Heart right ventricle (tissue), 16 donors: ENCODE measurements at regions of chr6 and their contacts with region 1.

Region 1: GRCh38 chr6:168377484-168377855 is 57.9 kb upstream of the DACT2 start:
- DNase-seq: peak; percentile 44 to 77
- ATAC-seq: peak; percentile 57 to 92 (median 86)
- H3K4me3 ChIP-seq: peak overlapping the region in 2 of 10 donors; percentile 0 to 13
- H3K27ac ChIP-seq: peak overlapping the region in 6 of 10 donors; percentile 8 to 77 (median 56)
- H3K4me1 ChIP-seq: peaks cover 0 to 8% (median 5%) of the 10 kb centered on the region in 9 donors
- H3K27me3 ChIP-seq: peaks cover 0 to 26% (median 0%) of the 10 kb centered on the region in 7 donors
- CTCF ChIP-seq: no peak

Region 2: DNA sequence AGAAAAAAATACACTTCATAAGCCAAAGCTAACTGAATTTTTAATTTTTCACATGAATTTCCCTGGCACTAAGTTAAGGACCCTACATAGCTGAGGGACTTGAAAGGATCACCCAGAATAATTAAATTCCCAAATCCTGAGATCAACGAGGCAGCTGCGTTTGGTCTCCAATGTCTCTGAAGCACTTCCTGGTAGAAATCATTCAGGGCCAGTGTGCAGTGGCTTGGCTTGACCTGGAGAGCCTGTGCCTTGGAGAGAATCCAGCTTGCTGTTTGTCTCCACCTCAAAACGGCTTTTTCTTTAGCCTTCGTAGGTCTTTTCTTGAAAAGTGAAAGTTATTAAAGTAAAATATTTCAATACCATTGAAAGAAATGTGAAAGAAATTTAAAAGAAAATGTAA is 155.9 kb after region 1 on chr6:
- intact Hi-C with region 1: loop called in 2 of 10 experiments (anchors 5 to 10 kb)
- DNase-seq: peak in 1 of 2 donors; percentile 47
- ATAC-seq: peak in 7 of 8 donors; percentile 40 to 80 (median 66)
- H3K4me3 ChIP-seq: no peak overlapping the region
- H3K27ac ChIP-seq: peak overlapping the region in 9 of 10 donors; percentile 5 to 69 (median 44)
- H3K4me1 ChIP-seq: peaks cover 0 to 58% (median 11%) of the 10 kb centered on the region in 9 donors
- H3K27me3 ChIP-seq: no peaks in the 10 kb centered on the region
- CTCF ChIP-seq: no peak